ENCODE measurements at regions of chr15 and their contacts with region 1.

Region 1: DNA sequence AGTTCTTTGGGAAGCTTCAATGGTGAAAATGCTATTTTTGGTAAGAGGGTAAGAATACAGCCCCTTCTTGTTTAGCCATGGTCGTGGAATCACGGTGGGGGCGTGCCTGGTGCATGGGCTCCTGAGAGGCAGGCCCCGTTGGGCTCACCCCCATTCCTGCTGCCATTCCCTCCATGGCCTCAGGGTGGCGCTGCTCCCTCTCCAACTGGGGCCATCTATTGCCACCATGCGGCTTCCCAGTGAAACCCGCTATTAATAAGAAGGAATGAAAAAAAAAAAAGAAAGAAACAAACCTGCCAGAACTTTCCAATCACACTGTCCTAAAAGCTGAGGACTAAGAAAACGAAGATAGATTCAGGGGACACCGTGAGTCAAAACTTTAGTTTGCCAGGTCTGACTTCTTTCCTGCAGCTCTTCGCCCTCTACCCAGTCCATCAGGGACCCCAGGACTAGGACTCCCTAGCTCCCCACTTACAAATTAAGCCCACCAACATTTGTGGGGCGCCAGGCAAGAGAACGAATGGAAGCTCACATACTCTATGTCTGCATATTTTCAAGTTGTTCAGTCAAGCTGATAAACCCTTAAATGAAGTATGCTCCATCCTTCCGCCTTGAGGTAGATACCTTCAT is 30.6 kb upstream of the ABHD2 start:
- DNase-seq: peak; percentile 74 to 84 (median 81)
- H3K4me3 ChIP-seq: no peak overlapping the region
- H3K27ac ChIP-seq: no peak overlapping the region
- H3K4me1 ChIP-seq: peaks cover under 1 to 5% (median 2%) of the 10 kb centered on the region in 4 experiments
- H3K27me3 ChIP-seq: no peaks in the 10 kb centered on the region

Region 2: DNA sequence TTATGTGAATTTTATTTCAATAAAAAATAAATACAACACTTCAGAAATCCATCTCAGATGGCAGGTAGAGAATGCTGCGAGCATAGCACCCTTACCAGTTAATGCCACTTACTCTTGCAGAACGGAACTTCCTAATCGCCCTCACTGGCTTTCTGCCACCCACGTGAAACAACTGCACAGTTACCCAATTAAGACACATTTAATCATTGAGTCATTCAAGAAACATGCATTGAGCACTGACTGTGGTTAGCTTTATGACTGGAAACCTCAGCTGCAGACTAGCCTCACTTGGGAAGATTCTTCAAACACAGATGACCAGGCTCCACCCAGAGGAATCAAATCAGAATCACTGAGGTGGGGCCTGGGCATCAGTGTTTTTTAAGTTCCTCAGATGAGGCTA is 138.9 kb before region 1 on chr15:
- CTCF ChIA-PET with region 1: no interaction called
- POLR2A ChIA-PET with region 1: no interaction called
- DNase-seq: peak in 1 of 3 donors; percentile 9
- H3K4me3 ChIP-seq: no peak overlapping the region
- H3K27ac ChIP-seq: no peak overlapping the region
- H3K4me1 ChIP-seq: peaks cover 0 to 3% (median 1%) of the 10 kb centered on the region in 4 experiments
- H3K27me3 ChIP-seq: no peaks in the 10 kb centered on the region

Region 3: GRCh38 chr15:89070197-89071124 is 12.8 kb after region 1 on chr15:
- CTCF ChIA-PET with region 1: interaction called, 14 read pairs
- POLR2A ChIA-PET with region 1: interaction called, 3 read pairs
- DNase-seq: peak; percentile 31 to 84 (median 78)
- H3K4me3 ChIP-seq: no peak overlapping the region
- H3K27ac ChIP-seq: no peak overlapping the region
- H3K4me1 ChIP-seq: peaks cover 0 to 43% (median 28%) of the 10 kb centered on the region in 4 experiments
- H3K27me3 ChIP-seq: no peaks in the 10 kb centered on the region

Region 4: GRCh38 chr15:89087830-89088604 is 30.4 kb after region 1 on chr15 and contains the start of gene ABHD2:
- CTCF ChIA-PET with region 1: interaction called, 63 read pairs
- POLR2A ChIA-PET with region 1: no interaction called
- DNase-seq: peak; percentile 100
- H3K4me3 ChIP-seq: peak within 1 kb of the TSS; percentile 70 to 95 (median 91)
- H3K27ac ChIP-seq: peak within 1 kb of the TSS; percentile 77 to 89
- H3K4me1 ChIP-seq: peaks cover 27 to 70% (median 56%) of the 10 kb centered on the region in 4 experiments
- H3K27me3 ChIP-seq: no peaks in the 10 kb centered on the region

Region 5: DNA sequence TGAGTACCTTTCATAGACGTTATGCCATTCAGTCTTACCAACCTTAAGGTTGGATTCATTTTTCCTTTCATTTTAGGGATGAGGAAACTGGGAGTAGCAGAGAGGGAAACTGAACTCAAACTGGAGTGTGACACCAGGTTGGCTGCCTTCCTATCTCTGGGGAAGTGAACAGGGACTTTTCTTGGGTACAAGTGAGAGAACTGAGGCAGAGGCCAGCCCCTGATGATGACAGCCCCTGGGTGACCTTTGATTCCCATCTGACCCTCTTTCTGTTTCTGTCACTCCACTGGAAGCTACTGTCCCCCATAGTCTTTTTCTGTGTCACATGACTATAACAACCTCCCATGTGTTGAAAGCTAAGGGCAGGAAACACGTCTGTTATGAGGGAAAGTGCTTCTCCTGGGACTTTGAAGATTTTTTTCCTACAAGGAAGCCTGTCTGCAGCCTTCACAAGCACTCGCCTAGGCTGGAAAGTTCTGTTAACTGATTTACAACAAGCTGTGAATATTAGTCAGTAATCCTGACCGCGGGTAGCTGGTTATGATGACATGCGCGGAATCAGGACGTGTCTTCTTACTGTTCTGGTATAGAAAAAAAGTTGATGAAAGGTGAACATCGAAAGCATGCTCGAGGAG is 62.0 kb after region 1 on chr15:
- CTCF ChIA-PET with region 1: interaction called, 11 read pairs
- POLR2A ChIA-PET with region 1: no interaction called
- DNase-seq: no peak
- H3K4me3 ChIP-seq: no peak overlapping the region
- H3K27ac ChIP-seq: no peak overlapping the region
- H3K4me1 ChIP-seq: peaks cover 5 to 29% (median 13%) of the 10 kb centered on the region in 4 experiments
- H3K27me3 ChIP-seq: no peaks in the 10 kb centered on the region

Region 6: GRCh38 chr15:89150762-89151664 is 93.4 kb after region 1 on chr15:
- CTCF ChIA-PET with region 1: interaction called, 17 read pairs
- POLR2A ChIA-PET with region 1: no interaction called
- DNase-seq: peak in 2 of 3 donors; percentile 48 to 53
- H3K4me3 ChIP-seq: no peak overlapping the region
- H3K27ac ChIP-seq: no peak overlapping the region
- H3K4me1 ChIP-seq: peaks cover 0 to 18% (median 4%) of the 10 kb centered on the region in 4 experiments
- H3K27me3 ChIP-seq: no peaks in the 10 kb centered on the region

Measured in common myeloid progenitor, CD34-positive (primary cell).